ENCODE measurements at regions of chr11 and their contacts with region 1.

Region 1: GRCh38 chr11:73307323-73308002 is 613 bp upstream of the ARHGEF17 start:
- DNase-seq: peak; percentile 98
- ATAC-seq: peak; percentile 64 to 78 (median 74)
- H3K4me3 ChIP-seq: peak overlapping the region; percentile 63 to 88 (median 74)
- H3K27ac ChIP-seq: peak overlapping the region; percentile 95 to 100 (median 98)
- H3K4me1 ChIP-seq: peaks cover 5 to 58% (median 39%) of the 10 kb centered on the region in 9 donors
- H3K27me3 ChIP-seq: peaks cover 0 to 23% (median 0%) of the 10 kb centered on the region in 7 donors
- CTCF ChIP-seq: peak; percentile 70 to 87 (median 81)

Region 2: DNA sequence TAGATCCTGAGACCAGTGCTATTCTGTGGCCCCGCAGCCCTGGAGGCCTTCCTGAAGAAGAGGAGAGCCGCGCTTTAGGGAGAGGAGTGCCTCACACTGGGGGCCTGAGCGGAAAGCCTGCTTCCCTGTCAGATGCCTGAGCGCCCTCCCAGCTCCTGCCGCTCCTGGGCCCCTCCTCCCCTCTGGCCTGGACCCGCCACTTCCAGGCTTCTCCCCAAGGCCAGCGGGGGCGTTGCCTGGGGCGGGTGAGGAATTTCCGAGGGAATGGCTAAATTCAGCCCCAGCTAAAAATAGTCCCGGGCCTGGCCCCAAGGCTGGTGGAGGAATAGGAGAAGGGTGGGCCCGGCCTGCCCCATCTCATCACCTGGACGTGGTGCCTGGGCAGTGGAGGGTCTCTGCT is 16.0 kb after region 1 on chr11:
- intact Hi-C with region 1: loop called in 1 of 10 experiments (anchors 2 kb)
- DNase-seq: peak; percentile 83 to 89
- ATAC-seq: peak; percentile 56 to 83 (median 79)
- H3K4me3 ChIP-seq: peak overlapping the region in 6 of 10 donors; percentile 6 to 24 (median 20)
- H3K27ac ChIP-seq: peak overlapping the region; percentile 21 to 100 (median 90)
- H3K4me1 ChIP-seq: peaks cover 56 to 100% (median 99%) of the 10 kb centered on the region in 9 donors
- H3K27me3 ChIP-seq: no peaks in the 10 kb centered on the region
- CTCF ChIP-seq: peak in 3 of 9 donors; percentile 7 to 29 (median 13)

Region 3: DNA sequence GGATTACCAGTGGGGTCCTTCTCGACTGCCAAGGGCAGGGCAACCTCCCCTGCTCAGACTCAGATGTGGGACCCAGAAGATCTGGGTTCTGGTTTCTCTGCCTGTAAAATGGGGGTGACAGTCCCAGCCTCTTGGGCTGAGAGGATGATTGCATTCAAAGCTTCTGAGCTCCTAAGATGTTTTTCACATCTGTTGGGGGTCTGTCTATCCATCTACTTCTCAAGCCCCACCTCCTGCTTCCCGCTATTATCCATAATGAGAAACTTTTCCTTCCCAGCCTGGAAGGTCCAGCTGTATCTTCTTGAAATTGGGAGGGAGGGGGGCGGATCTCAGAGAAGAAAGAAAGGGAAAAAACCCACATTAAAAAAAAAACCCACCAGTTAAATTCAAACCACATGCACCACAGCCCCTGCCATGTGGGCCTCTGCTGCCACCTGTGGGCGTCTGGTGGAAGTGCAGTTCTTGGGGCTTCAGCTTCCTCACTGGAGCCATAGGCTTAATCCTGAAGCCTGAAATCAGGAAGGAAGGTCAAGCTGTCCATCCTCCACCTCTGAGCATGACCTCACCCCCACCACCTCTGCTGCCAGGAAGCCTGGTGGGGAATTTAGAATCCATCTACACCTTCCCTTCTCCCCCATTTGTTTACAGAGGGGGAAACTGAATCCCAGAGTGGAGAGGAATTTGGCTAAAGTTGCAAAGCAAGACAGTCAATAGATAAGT is 27.9 kb after region 1 on chr11:
- intact Hi-C with region 1: loop called (anchors 1 to 2 kb)
- DNase-seq: peak; percentile 88 to 89
- ATAC-seq: peak; percentile 46 to 83 (median 63)
- H3K4me3 ChIP-seq: peak overlapping the region in 4 of 10 donors; percentile 9 to 25 (median 18)
- H3K27ac ChIP-seq: peak overlapping the region; percentile 45 to 90 (median 78)
- H3K4me1 ChIP-seq: peaks cover 37 to 94% (median 56%) of the 10 kb centered on the region in 9 donors
- H3K27me3 ChIP-seq: no peaks in the 10 kb centered on the region
- CTCF ChIP-seq: peak; percentile 96 to 100 (median 99)

Region 4: DNA sequence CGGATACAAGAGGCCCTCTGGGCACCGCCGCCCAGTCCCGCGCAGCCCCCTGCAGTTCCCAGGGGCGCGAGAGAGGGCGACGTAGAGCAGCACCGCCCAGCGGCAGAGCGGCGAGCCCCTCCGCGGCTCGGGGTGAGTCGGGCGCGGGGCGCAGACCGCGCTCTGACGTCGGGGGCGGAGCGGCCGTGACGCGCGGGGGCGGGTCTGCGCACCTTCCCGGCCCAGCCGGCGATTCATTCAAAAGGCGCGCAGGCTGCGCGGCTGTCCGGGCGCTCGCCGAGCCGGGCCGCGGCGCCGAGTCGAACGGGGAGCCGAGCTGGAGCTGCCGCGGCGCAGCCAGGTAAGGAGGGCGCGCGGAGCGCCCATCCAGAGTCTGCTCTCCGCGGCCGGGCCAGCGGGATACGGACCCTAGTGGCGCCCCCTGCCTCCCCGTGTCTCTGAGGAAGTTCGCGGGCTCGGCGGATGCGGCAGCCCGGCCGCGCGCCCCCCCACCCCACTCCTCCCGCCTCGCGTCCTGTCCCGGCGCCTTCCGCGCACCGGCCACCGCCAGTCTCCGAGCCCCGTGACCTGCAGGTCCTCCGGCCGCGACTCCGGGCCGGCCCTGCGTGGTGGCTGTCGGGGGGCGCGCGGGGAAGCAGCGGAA is 68.8 kb after region 1 on chr11 and contains the start of gene RELT:
- intact Hi-C with region 1: loop called in 1 of 10 experiments (anchors 5 kb)
- DNase-seq: peak; percentile 85 to 93
- ATAC-seq: peak; percentile 82 to 94 (median 91)
- H3K4me3 ChIP-seq: peak within 1 kb of the TSS; percentile 54 to 95 (median 74)
- H3K27ac ChIP-seq: peak within 1 kb of the TSS in 9 of 10 donors; percentile 64 to 99 (median 82)
- H3K4me1 ChIP-seq: peaks cover 12 to 67% (median 48%) of the 10 kb centered on the region in 9 donors
- H3K27me3 ChIP-seq: no peaks in the 10 kb centered on the region
- CTCF ChIP-seq: peak; percentile 89 to 98 (median 94)
- total RNA-seq, gene RELT: 1.0 to 9.2 (median 2.7) TPM

Region 5: GRCh38 chr11:73393479-73394380 is 86.3 kb after region 1 on chr11:
- intact Hi-C with region 1: loop called in 7 of 10 experiments (anchors 1 to 10 kb)
- DNase-seq: peak; percentile 70 to 75
- ATAC-seq: peak; percentile 63 to 80 (median 70)
- H3K4me3 ChIP-seq: no peak overlapping the region
- H3K27ac ChIP-seq: peak overlapping the region in 1 of 10 donors; percentile 58
- H3K4me1 ChIP-seq: peaks cover 8 to 53% (median 13%) of the 10 kb centered on the region in 9 donors
- H3K27me3 ChIP-seq: no peaks in the 10 kb centered on the region
- CTCF ChIP-seq: peak; percentile 67 to 89 (median 83)

Region 6: GRCh38 chr11:73404048-73404447 is 96.6 kb after region 1 on chr11:
- intact Hi-C with region 1: loop called in 2 of 10 experiments (anchors 5 to 10 kb)
- DNase-seq: peak; percentile 72 to 79
- ATAC-seq: peak; percentile 78 to 90 (median 88)
- H3K4me3 ChIP-seq: no peak overlapping the region
- H3K27ac ChIP-seq: peak overlapping the region in 7 of 10 donors; percentile 29 to 71 (median 51)
- H3K4me1 ChIP-seq: peaks cover 3 to 37% (median 19%) of the 10 kb centered on the region in 9 donors
- H3K27me3 ChIP-seq: no peaks in the 10 kb centered on the region
- CTCF ChIP-seq: peak; percentile 58 to 89 (median 82)

Region 7: GRCh38 chr11:73414977-73415651 is 107.7 kb after region 1 on chr11:
- intact Hi-C with region 1: no loop called
- DNase-seq: no peak
- ATAC-seq: peak; percentile 34 to 63 (median 48)
- H3K4me3 ChIP-seq: no peak overlapping the region
- H3K27ac ChIP-seq: peak overlapping the region in 8 of 10 donors; percentile 7 to 75 (median 46)
- H3K4me1 ChIP-seq: peaks cover 0 to 53% (median 26%) of the 10 kb centered on the region in 9 donors
- H3K27me3 ChIP-seq: no peaks in the 10 kb centered on the region
- CTCF ChIP-seq: no peak

Region 8: GRCh38 chr11:73566977-73567755 is 259.7 kb after region 1 on chr11:
- intact Hi-C with region 1: no loop called
- DNase-seq: no peak
- ATAC-seq: peak in 3 of 8 donors; percentile 16 to 57 (median 42)
- H3K4me3 ChIP-seq: no peak overlapping the region
- H3K27ac ChIP-seq: no peak overlapping the region
- H3K4me1 ChIP-seq: peaks cover 0 to 32% (median 22%) of the 10 kb centered on the region in 9 donors
- H3K27me3 ChIP-seq: no peaks in the 10 kb centered on the region
- CTCF ChIP-seq: no peak

Region 9: DNA sequence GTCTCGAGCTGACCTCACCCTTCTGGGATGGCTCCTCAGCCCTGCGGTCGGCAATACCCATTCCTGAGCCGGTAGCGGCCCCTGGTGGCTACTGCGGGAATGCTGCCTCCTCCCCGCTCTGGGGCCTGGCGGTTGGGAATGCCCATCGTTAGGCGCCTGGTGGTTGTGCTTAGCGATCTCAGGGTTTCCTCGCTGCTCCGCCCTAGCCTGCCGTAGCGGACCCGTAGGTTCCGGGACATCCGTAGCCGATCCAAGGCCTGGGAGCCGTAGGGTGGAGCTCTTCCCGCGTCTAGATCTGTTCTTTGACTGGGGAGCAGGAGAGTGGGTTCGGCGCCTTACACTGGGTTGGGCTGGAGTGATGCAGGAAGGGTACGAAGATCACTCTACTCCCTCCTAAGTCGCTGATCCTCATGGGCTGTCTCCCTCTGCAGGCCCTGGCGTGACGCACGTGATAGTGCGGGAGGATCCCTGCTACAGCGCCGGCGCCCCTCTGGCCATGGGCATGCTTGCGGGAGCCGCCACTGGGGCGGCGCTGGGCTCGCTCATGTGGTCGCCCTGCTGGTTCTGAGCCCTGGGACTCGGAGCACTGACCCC is 353.7 kb after region 1 on chr11:
- intact Hi-C with region 1: loop called in 1 of 10 experiments (anchors 2 kb)
- DNase-seq: peak; percentile 90 to 94
- ATAC-seq: peak; percentile 93 to 98 (median 97)
- H3K4me3 ChIP-seq: peak overlapping the region in 9 of 10 donors; percentile 3 to 52 (median 41)
- H3K27ac ChIP-seq: peak overlapping the region in 2 of 10 donors; percentile 22 to 39
- H3K4me1 ChIP-seq: peaks cover 6 to 47% (median 32%) of the 10 kb centered on the region in 9 donors
- H3K27me3 ChIP-seq: no peaks in the 10 kb centered on the region
- CTCF ChIP-seq: peak; percentile 92 to 99 (median 97)

Region 10: GRCh38 chr11:74090701-74091100 is 783.2 kb after region 1 on chr11:
- intact Hi-C with region 1: no loop called
- DNase-seq: no peak
- ATAC-seq: no peak
- H3K4me3 ChIP-seq: no peak overlapping the region
- H3K27ac ChIP-seq: no peak overlapping the region
- H3K4me1 ChIP-seq: no peaks in the 10 kb centered on the region
- H3K27me3 ChIP-seq: no peaks in the 10 kb centered on the region
- CTCF ChIP-seq: peak in 2 of 9 donors; percentile 12 to 23